K562 (cell line): ENCODE measurements at regions of chr14 and their contacts with region 1.

Region 1: DNA sequence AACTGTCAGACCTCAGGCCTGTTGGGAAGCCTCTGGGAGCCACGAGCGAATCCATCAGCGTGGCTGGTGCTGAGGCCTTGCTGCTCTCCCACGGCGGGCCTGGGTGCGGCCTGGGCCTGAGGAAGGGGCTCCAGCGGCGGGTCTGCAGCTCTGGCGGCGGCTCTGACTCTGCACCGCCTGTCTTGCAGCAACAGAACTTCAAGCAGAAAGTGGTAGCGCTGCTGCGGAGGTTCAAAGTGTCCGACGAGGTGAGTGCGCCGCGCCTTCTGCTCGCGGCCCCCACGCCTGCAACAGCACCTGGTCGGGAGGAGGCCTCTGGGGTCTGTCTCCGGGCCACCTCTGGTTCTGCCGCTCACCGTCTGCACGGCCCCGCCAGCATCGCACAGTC is 28.7 kb upstream of the TEX22 start:
- DNase-seq: no peak
- ATAC-seq: no peak
- H3K4me3 ChIP-seq: no peak overlapping the region
- H3K27ac ChIP-seq: no peak overlapping the region
- H3K4me1 ChIP-seq: peaks cover 0 to 20% of the 10 kb centered on the region in 2 experiments; a peak in 3 of 5 replicates
- H3K27me3 ChIP-seq: no peaks in the 10 kb centered on the region
- CTCF ChIP-seq: no peak
- EP300 ChIP-seq: no peak
- POLR2A ChIP-seq: no peak
- RAD21 ChIP-seq: no peak

Region 2: GRCh38 chr14:105144666-105145380 is 224.8 kb before region 1 on chr14:
- CTCF ChIA-PET with region 1: no interaction called
- POLR2A ChIA-PET with region 1: no interaction called
- in situ Hi-C with region 1: no loop called
- intact Hi-C with region 1: no loop called
- DNase-seq: no peak
- ATAC-seq: no peak
- H3K4me3 ChIP-seq: no peak overlapping the region
- H3K27ac ChIP-seq: no peak overlapping the region
- H3K4me1 ChIP-seq: no peaks in the 10 kb centered on the region; a peak in 1 of 5 replicates
- H3K27me3 ChIP-seq: no peaks in the 10 kb centered on the region
- CTCF ChIP-seq: no peak
- EP300 ChIP-seq: no peak
- POLR2A ChIP-seq: no peak
- RAD21 ChIP-seq: no peak

Region 3: DNA sequence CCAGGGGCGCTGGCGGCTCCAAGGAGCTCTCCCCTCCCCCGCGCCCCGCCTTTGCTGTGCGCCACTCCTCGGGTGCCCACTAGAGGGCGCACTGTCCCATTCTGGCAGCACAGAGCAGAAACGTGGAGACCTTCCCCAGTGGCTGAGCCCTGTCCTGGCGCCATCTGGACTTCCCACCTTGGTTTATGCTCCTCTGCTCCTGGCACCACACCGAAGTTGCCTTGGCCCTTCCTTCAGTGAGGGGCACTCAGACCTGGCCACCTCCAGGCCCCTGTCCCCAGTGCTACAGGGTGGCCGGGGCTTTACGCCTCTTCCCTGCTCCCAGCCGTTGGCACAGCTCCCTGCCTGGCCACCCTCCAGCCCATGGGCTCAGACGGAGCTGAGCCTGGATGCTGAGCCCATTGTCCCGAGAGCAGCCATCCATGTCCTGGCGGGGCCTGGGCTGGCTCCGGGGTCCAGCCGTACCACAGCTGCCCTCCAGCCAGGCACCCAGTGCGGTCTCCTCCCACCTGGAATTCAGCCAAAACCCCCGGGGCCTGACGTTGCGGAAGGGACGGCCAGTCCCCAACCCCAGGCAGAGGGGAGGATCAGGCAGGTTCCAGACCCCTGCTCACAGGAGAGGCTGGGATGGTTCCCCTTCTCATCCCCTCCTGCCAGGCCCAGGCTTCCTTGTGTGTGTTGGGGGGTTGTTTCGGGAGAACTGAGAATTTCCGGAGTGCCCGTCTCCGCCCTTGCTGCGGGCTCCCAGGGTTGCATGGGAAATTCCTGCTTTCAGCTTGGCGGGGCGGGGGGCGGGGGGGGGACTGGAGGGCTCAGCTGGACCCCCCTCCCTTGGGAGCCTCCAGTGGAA is 111.5 kb after region 1 on chr14:
- CTCF ChIA-PET with region 1: no interaction called
- POLR2A ChIA-PET with region 1: no interaction called
- in situ Hi-C with region 1: loop called (anchors 5 kb)
- intact Hi-C with region 1: loop called (anchors 2 kb)
- DNase-seq: peak; percentile 65 to 89 (median 78)
- ATAC-seq: peak; percentile 90
- H3K4me3 ChIP-seq: peak overlapping the region; percentile 32
- H3K27ac ChIP-seq: peak overlapping the region; percentile 89
- H3K4me1 ChIP-seq: peaks cover 12 to 91% of the 10 kb centered on the region in 2 experiments
- H3K27me3 ChIP-seq: no peaks in the 10 kb centered on the region; a peak in 1 of 5 replicates
- CTCF ChIP-seq: peak; percentile 92 to 98 (median 93)
- EP300 ChIP-seq: 0 out of 2 replicates have a peak, but pooled peaks have one; percentile 8
- POLR2A ChIP-seq: peak; percentile 72
- RAD21 ChIP-seq: peak; percentile 39 to 68; a peak in 3 of 4 replicates

Region 4: GRCh38 chr14:105646175-105646574 is 276.5 kb after region 1 on chr14:
- CTCF ChIA-PET with region 1: no interaction called
- POLR2A ChIA-PET with region 1: no interaction called
- in situ Hi-C with region 1: no loop called
- intact Hi-C with region 1: no loop called
- DNase-seq: no peak
- ATAC-seq: no peak
- H3K4me3 ChIP-seq: no peak overlapping the region
- H3K27ac ChIP-seq: no peak overlapping the region
- H3K4me1 ChIP-seq: no peaks in the 10 kb centered on the region
- H3K27me3 ChIP-seq: no peaks in the 10 kb centered on the region
- CTCF ChIP-seq: no peak
- EP300 ChIP-seq: no peak
- POLR2A ChIP-seq: no peak
- RAD21 ChIP-seq: no peak